AG04449 (cell line): ENCODE measurements at regions of chr6 and their contacts with region 1.

Region 1: DNA sequence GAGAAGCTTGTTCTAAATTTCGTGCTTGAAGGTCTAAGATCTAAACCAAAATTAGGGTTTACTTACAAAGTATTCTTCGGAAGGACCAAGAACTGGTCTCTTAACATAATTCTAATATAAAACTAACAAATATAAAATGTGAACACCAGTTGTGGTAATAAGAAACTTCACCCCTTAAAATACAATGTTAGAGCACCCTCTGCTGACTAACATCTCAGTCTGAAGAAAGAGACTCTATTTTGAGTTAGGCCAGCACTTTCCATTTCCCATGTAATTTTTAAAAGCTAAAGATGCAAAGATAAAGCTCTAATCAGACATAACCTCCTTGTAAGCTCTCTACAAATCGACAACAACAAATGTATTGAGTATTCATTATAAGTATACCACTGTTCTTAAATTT is 24.6 kb downstream of the ATG5 start:
- DNase-seq: no peak
- H3K4me3 ChIP-seq: no peak overlapping the region
- CTCF ChIP-seq: peak; percentile 40

Region 2: GRCh38 chr6:105431226-105431625 is 869.7 kb before region 1 on chr6:
- CTCF ChIA-PET with region 1: interaction called, 46 read pairs
- POLR2A ChIA-PET with region 1: no interaction called
- DNase-seq: no peak
- H3K4me3 ChIP-seq: no peak overlapping the region
- CTCF ChIP-seq: peak; percentile 25

Region 3: DNA sequence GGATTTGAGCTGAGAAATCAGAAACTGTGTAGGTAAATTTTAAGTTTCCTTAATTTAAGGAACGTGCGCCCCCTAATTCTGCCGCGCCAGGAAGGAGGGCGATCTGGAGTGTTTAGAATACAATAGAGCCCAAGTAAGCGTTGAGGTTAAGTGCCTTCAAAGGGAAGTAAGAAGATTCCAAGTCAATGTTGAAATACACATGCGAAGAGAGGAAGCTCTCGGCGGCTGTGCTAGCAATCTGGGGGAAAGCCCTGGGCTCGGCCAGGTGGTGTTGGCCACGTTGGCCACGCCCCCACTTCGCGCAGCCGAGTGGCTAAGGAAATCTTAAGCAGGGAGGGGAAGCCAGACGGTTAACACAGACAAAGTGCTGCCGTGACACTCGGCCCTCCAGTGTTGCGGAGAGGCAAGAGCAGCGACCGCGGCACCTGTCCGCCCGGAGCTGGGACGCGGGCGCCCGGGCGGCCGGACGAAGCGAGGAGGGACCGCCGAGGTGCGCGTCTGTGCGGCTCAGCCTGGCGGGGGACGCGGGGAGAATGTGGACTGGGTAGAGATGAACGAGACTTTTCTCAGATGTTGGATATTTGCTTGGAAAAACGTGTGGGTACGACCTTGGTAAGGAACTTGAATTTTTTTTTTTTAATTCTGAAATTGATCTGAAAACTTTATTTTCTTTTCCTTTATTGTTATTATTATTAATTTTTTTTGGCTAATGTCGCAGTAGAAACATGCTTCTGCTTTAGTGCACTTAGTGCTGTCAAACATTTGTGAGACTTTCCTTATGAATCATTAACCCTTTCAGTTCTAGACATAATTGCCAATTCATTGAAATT is 214.7 kb before region 1 on chr6 and contains the start of gene PRDM1:
- CTCF ChIA-PET with region 1: interaction called, 78 read pairs
- POLR2A ChIA-PET with region 1: no interaction called
- DNase-seq: no peak
- H3K4me3 ChIP-seq: peak within 1 kb of the TSS; percentile 68
- CTCF ChIP-seq: no peak

Region 4: DNA sequence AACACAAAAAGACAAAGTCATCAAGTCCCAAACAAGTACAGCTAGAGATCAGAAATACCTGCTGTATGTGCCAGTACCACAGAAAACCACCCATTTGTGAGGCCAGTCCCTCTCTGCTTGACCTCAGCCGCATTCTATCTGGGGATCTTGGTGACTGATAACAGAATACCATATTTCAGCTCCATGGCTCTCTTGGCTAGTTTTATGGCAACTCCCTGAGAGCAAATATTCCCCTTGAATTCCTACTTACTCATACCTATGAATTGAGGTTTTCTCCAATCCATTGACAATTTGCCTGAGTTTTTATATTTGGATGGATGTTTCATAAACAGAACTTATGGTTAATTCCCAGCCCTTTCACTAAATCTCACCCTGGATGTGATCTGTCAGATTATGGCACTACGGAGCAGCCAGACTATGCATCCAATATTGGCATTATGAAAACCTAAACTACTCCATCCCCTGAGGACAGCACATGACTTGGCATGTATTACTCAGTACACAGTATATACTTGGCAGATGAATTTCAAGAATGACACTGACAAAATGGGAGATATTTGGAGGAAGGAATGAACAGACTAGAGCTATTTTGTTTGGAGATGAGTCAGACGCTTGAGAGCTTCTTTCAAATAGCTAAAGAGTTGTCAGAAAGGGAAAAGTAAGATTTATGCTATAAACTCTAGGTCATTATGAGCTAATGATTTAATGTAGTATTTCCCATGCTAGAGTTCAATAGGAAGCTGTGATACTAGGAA is 119.1 kb before region 1 on chr6:
- CTCF ChIA-PET with region 1: interaction called, 14 read pairs
- POLR2A ChIA-PET with region 1: no interaction called
- DNase-seq: peak; percentile 83
- H3K4me3 ChIP-seq: no peak overlapping the region
- CTCF ChIP-seq: no peak

Region 5: DNA sequence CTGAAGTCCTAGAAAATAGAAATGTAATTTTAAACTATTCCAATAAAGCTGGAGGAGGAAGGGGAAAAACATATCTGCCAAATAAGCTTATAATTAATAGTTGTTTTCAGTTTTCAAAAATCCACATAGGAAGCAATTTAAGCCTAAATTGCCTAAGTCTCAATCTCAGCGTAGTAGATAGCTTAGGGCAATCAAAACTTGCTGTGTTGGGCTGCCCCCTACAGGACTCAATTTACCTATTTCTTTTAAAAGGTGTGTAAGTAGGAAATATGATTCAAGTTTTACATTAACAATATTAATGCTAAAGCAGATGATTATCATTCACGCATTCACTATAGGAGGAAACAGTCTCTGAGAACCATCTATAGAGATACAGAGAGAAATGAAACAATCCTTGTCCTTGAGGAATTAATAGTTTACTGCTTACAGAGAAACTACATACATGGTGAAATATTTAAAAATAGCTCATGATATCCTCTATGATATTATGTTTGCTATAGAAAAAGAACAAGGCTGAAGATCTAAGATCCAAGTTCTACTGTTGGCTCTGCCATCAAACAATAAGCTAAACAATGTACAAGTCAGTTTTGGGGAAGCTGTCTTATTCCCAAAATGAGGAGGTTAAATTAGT is 77.5 kb before region 1 on chr6:
- CTCF ChIA-PET with region 1: interaction called, 21 read pairs
- POLR2A ChIA-PET with region 1: no interaction called
- DNase-seq: peak; percentile 37
- H3K4me3 ChIP-seq: no peak overlapping the region
- CTCF ChIP-seq: peak; percentile 47

Region 6: GRCh38 chr6:106287205-106287604 is 13.7 kb before region 1 on chr6:
- CTCF ChIA-PET with region 1: interaction called, 26 read pairs
- POLR2A ChIA-PET with region 1: no interaction called
- DNase-seq: no peak
- H3K4me3 ChIP-seq: no peak overlapping the region
- CTCF ChIP-seq: no peak